ENCODE measurements at regions of chr11 and their contacts with region 1.

Region 1: GRCh38 chr11:615504-616319 is at the start of gene IRF7:
- DNase-seq: peak; percentile 79 to 89 (median 83)
- H3K4me3 ChIP-seq: peak within 1 kb of the TSS; percentile 78 to 80
- H3K4me3 Mint-ChIP-seq: peak within 1 kb of the TSS; percentile 90 to 96 (median 93)
- H3K27ac ChIP-seq: peak within 1 kb of the TSS; percentile 96
- H3K27ac Mint-ChIP-seq: peak within 1 kb of the TSS; percentile 89 to 96 (median 93)
- H3K4me1 ChIP-seq: peaks cover 29% of the 10 kb centered on the region
- H3K4me1 Mint-ChIP-seq: peaks cover 6 to 35% (median 20%) of the 10 kb centered on the region in 4 donors
- H3K27me3 ChIP-seq: no peaks in the 10 kb centered on the region
- H3K27me3 Mint-ChIP-seq: no peaks in the 10 kb centered on the region
- total RNA-seq, gene IRF7: 67.6 to 76.6 TPM

Region 2: DNA sequence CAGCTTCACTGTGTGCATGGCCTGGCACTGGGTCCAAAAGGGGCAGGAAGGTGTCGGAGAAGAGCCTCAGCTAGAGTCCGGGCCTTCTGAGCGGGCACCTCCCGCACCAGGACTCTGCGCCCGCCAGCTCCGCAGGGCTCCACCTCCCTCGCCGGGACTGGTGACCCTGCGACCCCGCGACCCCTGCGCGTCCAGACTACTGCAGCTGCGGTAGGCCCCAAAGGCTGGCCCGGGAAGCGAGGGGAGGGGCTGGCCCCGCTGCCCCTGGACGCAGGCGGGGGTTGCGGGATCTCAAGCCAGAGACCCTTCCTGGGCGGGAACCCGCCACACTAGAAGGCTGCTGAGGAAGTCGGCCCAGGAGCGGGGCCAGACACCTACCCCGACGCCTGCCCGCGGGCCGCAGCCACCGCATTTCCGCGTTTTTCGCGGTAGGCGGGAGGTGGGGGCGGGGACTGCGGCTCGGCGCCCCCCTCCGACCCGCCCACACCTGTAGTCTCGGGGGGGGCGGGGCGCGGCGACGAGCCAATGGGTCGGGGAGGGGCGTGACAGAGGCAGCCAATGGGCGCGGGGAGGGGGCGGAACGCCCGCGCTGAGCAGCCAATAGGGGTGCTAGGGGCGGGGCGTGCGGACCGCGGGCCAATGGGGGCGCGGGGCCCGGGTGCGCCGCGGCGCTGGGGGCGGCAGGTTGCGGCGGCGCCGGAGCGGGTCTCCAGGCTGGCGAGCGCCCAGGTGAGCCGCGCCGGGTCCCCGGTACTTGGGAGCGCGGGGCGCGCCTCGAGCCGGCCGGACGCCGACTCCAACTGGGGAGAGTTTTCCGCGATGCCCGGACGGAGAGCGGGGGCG is 55.2 kb before region 1 on chr11 and contains the starts of genes LMNTD2 and RASSF7:
- CTCF ChIA-PET with region 1: no interaction called
- POLR2A ChIA-PET with region 1: interaction called, 7 read pairs
- intact Hi-C with region 1: loop called (anchors 2 kb)
- DNase-seq: peak; percentile 92 to 95 (median 92)
- H3K4me3 ChIP-seq: peak within 1 kb of the TSS; percentile 69 to 75
- H3K4me3 Mint-ChIP-seq: peak within 1 kb of the TSS; percentile 84 to 94 (median 89)
- H3K27ac ChIP-seq: peak within 1 kb of the TSS; percentile 62
- H3K27ac Mint-ChIP-seq: peak within 1 kb of the TSS; percentile 80 to 93 (median 89)
- H3K4me1 ChIP-seq: peaks cover 22% of the 10 kb centered on the region
- H3K4me1 Mint-ChIP-seq: peaks cover 8 to 17% (median 13%) of the 10 kb centered on the region in 4 donors
- H3K27me3 ChIP-seq: no peaks in the 10 kb centered on the region
- H3K27me3 Mint-ChIP-seq: no peaks in the 10 kb centered on the region
- total RNA-seq, gene LMNTD2: 7.0 to 8.1 TPM
- total RNA-seq, gene RASSF7: 52.7 to 55.2 TPM